Activated CD8-positive, alpha-beta memory T cell treated with anti-CD3 and anti-CD28 coated beads, Interleukin-2, amount 10 ng/mL, durations not matched to agents 7 days and 5 days (primary cell): ENCODE measurements at regions of chr2 and their contacts with region 1.

Region 1: DNA sequence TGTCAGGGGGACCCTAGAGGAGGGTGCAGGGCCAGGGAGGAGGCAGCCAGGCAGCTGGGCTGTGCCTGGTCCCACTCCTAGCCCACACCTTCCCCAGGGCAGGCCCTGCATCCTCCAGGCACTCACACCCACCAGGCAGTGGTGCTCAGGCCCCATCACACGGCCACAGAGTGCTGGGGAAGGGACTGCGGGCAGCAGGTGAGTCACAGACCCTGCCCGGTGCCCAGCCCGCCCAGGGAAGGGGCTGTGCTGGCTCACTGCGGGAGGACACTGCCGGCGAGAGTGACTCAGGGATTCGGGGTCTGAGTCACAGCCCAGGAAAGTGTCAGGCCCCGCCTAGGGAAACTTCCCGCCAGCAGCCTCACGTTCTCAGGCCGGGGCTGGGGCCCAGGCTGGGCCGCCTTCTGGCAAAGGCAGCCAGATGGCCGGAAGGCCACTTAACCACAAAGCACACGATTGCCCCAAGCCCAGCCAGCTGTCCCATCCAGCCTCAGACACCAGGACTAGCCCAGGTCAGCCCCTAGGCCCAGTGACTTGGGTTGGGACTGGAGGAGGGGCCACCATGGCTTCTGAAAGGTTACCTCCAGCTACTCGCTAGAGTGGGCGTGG is 42.2 kb downstream of the BIN1 start:
- DNase-seq: peak; percentile 90
- ATAC-seq: peak; percentile 92
- H3K4me3 Mint-ChIP-seq: no peak overlapping the region
- H3K27ac Mint-ChIP-seq: peak overlapping the region; percentile 77
- H3K4me1 Mint-ChIP-seq: peaks cover 37% of the 10 kb centered on the region
- H3K27me3 Mint-ChIP-seq: no peaks in the 10 kb centered on the region

Region 2: DNA sequence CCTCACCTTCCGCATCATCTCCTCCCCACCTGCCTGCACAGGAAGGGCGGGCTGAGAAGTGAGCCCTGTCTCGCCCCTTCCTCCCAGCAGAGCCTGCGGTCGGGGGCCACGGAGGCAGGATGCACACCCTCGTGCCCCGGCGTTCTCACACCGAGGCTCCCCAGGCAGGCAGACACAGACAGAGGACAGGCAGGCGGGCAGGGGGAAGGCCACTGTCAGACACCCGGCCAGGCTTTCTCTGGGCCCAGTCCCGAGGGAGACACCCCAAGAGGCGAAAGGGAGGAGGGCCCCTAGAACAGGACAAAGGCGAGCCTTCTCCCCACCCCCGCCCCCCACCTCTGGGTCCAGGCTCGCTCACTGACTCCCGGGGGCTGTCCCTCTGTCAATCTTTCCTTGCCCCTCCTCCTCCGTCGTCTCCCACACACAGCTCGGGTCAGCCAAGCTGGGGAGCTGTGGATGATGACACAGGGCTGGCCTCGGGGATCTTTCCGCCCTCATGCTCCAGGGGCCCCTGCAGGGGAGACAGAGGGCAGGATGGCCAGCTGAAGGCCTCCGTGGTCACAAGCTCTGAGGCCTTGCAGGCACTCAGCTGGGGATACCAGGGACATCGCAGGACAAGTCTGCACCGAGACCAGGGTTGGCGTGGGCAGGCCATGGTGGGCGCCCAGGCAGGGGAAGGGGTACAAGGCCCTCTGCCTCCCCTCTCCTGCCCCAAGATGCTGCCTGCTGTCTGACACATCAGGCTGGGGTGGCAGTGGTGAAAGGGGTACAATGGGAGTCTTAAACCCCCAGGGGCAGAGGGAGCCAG is 17.3 kb after region 1 on chr2:
- CTCF ChIA-PET with region 1: interaction called, 94 read pairs
- DNase-seq: peak; percentile 95
- ATAC-seq: peak; percentile 73
- H3K4me3 Mint-ChIP-seq: peak overlapping the region; percentile 91
- H3K27ac Mint-ChIP-seq: peak overlapping the region; percentile 94
- H3K4me1 Mint-ChIP-seq: peaks cover 83% of the 10 kb centered on the region
- H3K27me3 Mint-ChIP-seq: no peaks in the 10 kb centered on the region

Region 3: DNA sequence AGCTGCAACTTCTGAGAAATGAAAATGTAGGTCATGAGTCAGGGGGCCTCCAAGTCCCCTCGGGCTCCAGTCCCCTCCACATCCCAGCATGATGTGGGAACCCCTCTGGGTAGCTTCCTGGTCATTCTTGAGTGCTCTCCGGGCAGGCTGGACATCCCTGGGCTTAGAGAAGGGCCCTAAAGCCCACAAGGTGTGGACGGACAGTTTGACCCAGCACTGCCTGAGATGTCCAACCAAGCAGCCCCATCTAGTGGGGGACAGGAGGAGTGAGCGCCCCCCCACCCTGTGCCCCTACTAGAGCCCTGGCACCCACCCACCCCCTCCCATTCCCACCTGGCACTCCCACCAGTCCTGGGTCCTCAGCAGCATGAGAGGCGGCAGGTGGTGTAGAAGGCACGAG is 109.4 kb after region 1 on chr2:
- CTCF ChIA-PET with region 1: interaction called, 13 read pairs
- DNase-seq: no peak
- ATAC-seq: no peak
- H3K4me3 Mint-ChIP-seq: no peak overlapping the region
- H3K27ac Mint-ChIP-seq: no peak overlapping the region
- H3K4me1 Mint-ChIP-seq: no peaks in the 10 kb centered on the region
- H3K27me3 Mint-ChIP-seq: peaks cover under 1% of the 10 kb centered on the region